ENCODE measurements at regions of chr3 and their contacts with region 1.

Region 1: DNA sequence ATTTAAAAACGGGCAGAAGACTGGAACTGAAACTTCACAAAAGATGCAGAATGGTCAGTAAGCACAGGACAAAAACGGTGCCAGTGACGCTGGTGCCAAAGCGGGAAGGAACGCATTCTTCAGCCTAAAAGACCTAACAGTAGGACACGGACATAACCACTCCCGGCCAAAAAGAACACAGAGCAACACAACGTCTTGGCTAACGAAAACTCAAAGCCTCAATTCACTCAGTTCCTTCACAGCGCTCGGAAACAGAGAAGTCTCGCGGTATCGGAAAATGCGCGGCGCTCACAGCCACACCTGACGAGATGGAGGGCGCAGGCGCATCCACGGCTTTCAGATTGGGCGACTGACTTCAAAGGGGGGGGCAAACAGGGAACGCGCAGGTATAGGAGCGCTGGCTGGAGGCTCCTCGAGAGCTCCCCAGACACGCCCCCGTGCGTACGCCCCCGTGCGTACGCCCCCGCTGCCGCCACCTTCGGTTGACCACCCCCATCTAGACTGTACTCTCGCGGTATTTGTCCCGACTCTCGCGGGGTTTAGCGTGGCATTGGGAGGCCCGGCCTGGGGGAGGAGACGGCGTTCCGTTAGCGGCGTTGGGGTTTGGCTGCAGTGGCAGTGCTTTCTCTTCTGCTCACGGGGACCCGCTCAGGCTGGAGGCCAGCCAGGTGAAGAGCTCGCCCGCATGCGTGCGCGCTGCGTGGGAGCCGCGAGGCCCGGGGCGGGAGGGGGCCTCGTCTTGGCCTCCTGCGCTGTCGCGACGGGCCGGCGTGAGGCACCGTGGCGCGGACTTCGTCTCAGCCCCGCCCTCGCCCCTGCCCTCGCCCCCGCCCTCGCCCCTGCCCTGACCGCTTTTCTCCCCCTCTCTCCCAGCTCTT is at the start of gene NKTR:
- DNase-seq: peak; percentile 99
- H3K4me3 Mint-ChIP-seq: peak within 1 kb of the TSS; percentile 98
- H3K27ac Mint-ChIP-seq: peak within 1 kb of the TSS; percentile 98
- H3K4me1 Mint-ChIP-seq: peaks cover 33% of the 10 kb centered on the region
- H3K27me3 Mint-ChIP-seq: no peaks in the 10 kb centered on the region
- total RNA-seq, gene NKTR: 65.9 to 73.9 TPM

Region 2: GRCh38 chr3:41987627-41988026 is 612.7 kb before region 1 on chr3:
- CTCF ChIA-PET with region 1: no interaction called
- POLR2A ChIA-PET with region 1: no interaction called
- intact Hi-C with region 1: no loop called
- DNase-seq: no peak
- H3K4me3 Mint-ChIP-seq: no peak overlapping the region
- H3K27ac Mint-ChIP-seq: no peak overlapping the region
- H3K4me1 Mint-ChIP-seq: no peaks in the 10 kb centered on the region
- H3K27me3 Mint-ChIP-seq: no peaks in the 10 kb centered on the region

Region 3: DNA sequence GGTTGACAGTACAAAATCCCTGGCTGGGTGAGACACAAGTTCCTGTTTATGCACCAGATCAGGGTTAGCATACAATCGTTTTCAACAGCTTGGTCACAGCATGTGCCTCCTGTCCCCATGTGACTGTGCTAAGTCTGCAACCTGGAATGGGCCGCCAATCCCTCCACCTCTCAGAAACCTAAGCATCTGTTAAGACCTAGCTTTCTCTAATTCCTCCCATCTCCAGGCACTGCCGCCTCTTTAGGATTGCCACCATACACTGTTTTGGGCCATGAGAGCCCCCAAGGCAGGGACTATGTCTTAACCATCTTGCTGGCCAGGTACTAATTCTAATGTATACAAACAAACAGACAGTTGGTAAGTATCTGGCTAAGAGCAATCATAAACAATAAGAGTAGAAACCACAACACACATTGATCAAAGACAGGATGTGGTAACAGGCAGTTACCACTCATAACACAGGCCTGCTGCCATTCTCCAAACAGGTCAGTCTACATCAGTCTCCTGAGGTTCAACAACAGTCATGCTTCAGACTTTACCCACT is 44.2 kb before region 1 on chr3:
- CTCF ChIA-PET with region 1: no interaction called
- POLR2A ChIA-PET with region 1: no interaction called
- intact Hi-C with region 1: loop called (anchors 2 kb)
- DNase-seq: peak; percentile 57
- H3K4me3 Mint-ChIP-seq: no peak overlapping the region
- H3K27ac Mint-ChIP-seq: peak overlapping the region; percentile 93
- H3K4me1 Mint-ChIP-seq: peaks cover 37% of the 10 kb centered on the region
- H3K27me3 Mint-ChIP-seq: no peaks in the 10 kb centered on the region

Region 4: GRCh38 chr3:42581709-42582473 is 18.5 kb before region 1 on chr3 and contains the start of gene SEC22C:
- CTCF ChIA-PET with region 1: interaction called, 32 read pairs
- POLR2A ChIA-PET with region 1: interaction called, 11 read pairs
- intact Hi-C with region 1: loop called (anchors 1 kb)
- DNase-seq: peak; percentile 98
- H3K4me3 Mint-ChIP-seq: peak within 1 kb of the TSS; percentile 83
- H3K27ac Mint-ChIP-seq: peak within 1 kb of the TSS; percentile 91
- H3K4me1 Mint-ChIP-seq: peaks cover 42% of the 10 kb centered on the region
- H3K27me3 Mint-ChIP-seq: no peaks in the 10 kb centered on the region
- total RNA-seq, gene SEC22C: 47.0 to 49.2 TPM

Region 5: DNA sequence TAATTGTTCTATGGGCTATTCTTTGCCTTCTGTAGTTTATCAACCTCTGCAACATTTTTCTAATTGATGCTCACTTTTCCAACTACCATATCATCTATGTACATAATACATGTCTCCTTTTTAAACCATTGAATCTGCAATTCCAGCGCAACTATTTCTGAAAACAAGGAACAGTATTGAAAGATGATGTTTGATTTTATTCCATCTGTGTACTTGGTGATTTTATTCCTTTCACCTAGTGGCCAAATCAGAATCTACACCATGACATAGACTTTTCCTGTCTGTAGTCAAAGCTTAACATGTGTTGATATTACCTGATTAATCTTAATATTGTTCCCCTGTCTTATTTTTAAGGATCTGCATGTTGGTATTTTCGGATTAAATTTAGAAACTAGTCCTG is 13.1 kb after region 1 on chr3:
- CTCF ChIA-PET with region 1: interaction called, 38 read pairs
- POLR2A ChIA-PET with region 1: interaction called, 12 read pairs
- intact Hi-C with region 1: no loop called
- DNase-seq: no peak
- H3K4me3 Mint-ChIP-seq: no peak overlapping the region
- H3K27ac Mint-ChIP-seq: peak overlapping the region; percentile 2
- H3K4me1 Mint-ChIP-seq: peaks cover 72% of the 10 kb centered on the region
- H3K27me3 Mint-ChIP-seq: no peaks in the 10 kb centered on the region

Region 6: GRCh38 chr3:42635111-42635510 is 34.8 kb after region 1 on chr3:
- CTCF ChIA-PET with region 1: interaction called, 9 read pairs
- POLR2A ChIA-PET with region 1: interaction called, 14 read pairs
- intact Hi-C with region 1: loop called (anchors 1 kb)
- DNase-seq: no peak
- H3K4me3 Mint-ChIP-seq: no peak overlapping the region
- H3K27ac Mint-ChIP-seq: no peak overlapping the region
- H3K4me1 Mint-ChIP-seq: peaks cover 20% of the 10 kb centered on the region
- H3K27me3 Mint-ChIP-seq: no peaks in the 10 kb centered on the region

Region 7: DNA sequence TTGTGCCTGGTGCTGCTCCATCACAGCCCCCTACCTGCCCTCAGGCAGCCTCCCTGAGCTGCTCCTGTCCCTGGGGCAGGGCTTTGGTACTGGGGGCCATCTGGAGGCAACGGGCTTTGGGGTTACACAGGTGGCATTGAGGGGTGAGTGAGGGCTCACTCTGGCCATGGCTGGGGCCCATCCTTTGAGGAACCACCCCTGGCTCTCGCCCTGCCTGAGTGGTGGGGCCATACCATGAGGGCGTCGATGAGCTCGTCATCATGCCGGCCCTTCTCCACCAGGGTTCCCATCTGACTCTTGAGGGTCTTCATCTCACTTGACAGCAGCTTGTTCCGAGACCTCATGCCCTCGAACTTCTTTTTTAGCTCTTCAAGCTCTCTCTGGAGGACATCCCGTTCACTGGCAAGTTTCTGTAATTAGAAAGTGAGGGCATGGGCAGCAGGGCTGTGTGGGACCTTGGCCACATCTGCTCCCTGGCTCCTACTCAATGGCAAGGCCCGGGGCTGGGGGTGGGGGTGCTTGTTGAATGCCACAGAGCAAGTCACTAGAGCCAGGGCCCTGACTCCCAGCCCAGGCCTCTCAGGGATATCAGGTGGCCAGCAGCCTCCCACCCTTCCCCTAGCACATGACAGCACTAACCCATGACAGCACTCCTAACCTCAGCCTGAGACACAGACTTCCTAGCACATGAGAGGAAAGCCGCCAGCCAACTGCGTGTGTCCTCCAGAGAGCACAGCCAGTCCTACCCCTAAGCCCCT is 139.2 kb after region 1 on chr3:
- CTCF ChIA-PET with region 1: interaction called, 10 read pairs
- POLR2A ChIA-PET with region 1: no interaction called
- intact Hi-C with region 1: no loop called
- DNase-seq: no peak
- H3K4me3 Mint-ChIP-seq: no peak overlapping the region
- H3K27ac Mint-ChIP-seq: no peak overlapping the region
- H3K4me1 Mint-ChIP-seq: peaks cover 4% of the 10 kb centered on the region
- H3K27me3 Mint-ChIP-seq: no peaks in the 10 kb centered on the region

Region 8: GRCh38 chr3:42772670-42773408 is 172.5 kb after region 1 on chr3 and contains the start of gene CCDC13:
- CTCF ChIA-PET with region 1: no interaction called
- POLR2A ChIA-PET with region 1: no interaction called
- intact Hi-C with region 1: loop called (anchors 2 kb)
- DNase-seq: peak; percentile 96
- H3K4me3 Mint-ChIP-seq: peak within 1 kb of the TSS; percentile 84
- H3K27ac Mint-ChIP-seq: peak within 1 kb of the TSS; percentile 56
- H3K4me1 Mint-ChIP-seq: peaks cover 10% of the 10 kb centered on the region
- H3K27me3 Mint-ChIP-seq: no peaks in the 10 kb centered on the region
- total RNA-seq, gene CCDC13: 0.76 TPM in 1 of 2 experiments, not detected in the other

Measured in activated CD4-positive, alpha-beta memory T cell treated with anti-CD3 and anti-CD28 coated beads for 36 hours (primary cell).